Activated CD8-positive, alpha-beta T cell treated with anti-CD3 and anti-CD28 coated beads for 36 hours (primary cell): ENCODE measurements at regions of chr17 and their contacts with region 1.

Region 1: DNA sequence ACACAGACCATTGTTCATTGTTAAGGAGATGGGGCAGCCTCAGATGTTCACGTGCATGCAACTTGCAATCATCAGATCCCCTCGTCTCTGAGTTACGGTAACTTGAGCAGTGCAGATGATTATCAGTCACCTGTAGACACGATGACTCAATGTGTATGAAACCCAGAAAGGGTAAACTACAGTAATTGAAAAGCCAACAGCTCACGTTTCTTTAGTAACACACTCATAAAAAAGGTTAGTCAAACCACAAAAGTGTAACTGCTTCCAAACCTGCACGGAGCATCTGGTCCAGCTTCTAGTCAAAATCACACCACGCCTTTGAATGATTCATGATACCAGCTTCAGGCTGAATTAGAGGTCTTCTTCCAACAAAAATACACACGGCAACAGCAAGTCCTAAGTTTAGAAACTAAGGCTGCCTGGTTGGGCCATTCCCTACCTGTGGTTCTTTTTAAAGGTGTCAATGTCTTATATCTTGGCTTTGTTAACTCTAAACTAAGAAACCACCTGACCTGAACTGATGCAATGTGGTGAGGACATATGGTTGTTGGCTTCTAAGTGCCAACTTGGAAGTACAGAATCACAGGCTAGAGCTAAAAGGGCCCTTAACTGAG is 32.3 kb downstream of the GRB7 start:
- DNase-seq: peak; percentile 84
- ATAC-seq: peak; percentile 81
- H3K4me3 Mint-ChIP-seq: peak overlapping the region; percentile 18
- H3K27ac Mint-ChIP-seq: peak overlapping the region; percentile 90
- H3K4me1 Mint-ChIP-seq: peaks cover 95% of the 10 kb centered on the region
- H3K27me3 Mint-ChIP-seq: no peaks in the 10 kb centered on the region
- CTCF ChIP-seq: no peak

Region 2: GRCh38 chr17:39813631-39814030 is 43.5 kb after region 1 on chr17:
- CTCF ChIA-PET with region 1: interaction called, 3 read pairs
- POLR2A ChIA-PET with region 1: interaction called, 3 read pairs
- intact Hi-C with region 1: loop called (anchors 5 kb)
- DNase-seq: peak; percentile 78
- ATAC-seq: peak; percentile 94
- H3K4me3 Mint-ChIP-seq: peak overlapping the region; percentile 62
- H3K27ac Mint-ChIP-seq: peak overlapping the region; percentile 80
- H3K4me1 Mint-ChIP-seq: peaks cover 64% of the 10 kb centered on the region
- H3K27me3 Mint-ChIP-seq: no peaks in the 10 kb centered on the region
- CTCF ChIP-seq: no peak